Activated naive CD8-positive, alpha-beta T cell treated with anti-CD3 and anti-CD28 coated beads, Interleukin-2, amount 10 ng/mL, durations not matched to agents 7 days and 5 days (primary cell): ENCODE measurements at regions of chr9 and their contacts with region 1.

Region 1: DNA sequence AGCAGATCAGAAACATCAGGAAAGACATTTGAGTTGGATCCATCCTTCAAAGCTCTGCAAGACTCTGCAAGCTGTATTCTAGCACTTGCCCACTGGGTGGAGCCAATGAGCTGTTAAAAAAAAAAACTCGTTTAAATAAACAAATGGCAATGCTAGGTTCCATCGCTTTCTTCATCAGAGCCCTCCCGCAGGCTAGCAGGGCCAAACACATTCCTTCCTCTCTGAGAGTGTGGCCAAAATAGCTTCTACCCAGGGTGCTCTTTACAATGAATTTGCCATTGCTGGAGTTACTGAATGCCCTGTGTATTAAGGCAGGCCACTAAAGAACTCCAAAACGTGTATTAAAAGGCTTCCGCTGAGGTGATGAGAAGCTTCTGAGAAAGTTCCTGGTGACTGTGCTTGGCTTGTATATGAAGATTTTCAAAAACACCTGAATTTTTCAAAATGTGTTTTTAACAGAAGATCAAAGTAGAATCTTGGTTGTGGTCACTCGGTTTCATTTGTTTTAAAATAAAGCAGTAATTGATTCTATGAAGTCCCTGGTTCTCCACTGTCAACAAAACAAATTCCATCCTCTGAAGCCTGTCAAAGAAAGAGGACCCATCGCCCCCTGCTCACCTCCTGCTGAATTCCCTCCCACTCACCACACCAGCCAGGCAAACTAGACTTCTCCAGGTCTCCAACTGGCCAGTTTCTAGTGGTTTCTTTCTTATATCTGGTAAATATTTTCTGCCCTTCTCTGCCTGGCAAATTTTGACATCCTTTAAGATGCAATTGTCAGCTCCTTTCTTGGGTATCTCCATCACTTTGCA is 36.5 kb upstream of the EQTN start:
- DNase-seq: peak; percentile 58
- ATAC-seq: peak; percentile 64
- H3K4me3 Mint-ChIP-seq: no peak overlapping the region
- H3K27ac Mint-ChIP-seq: no peak overlapping the region
- H3K4me1 Mint-ChIP-seq: peaks cover 28% of the 10 kb centered on the region
- H3K27me3 Mint-ChIP-seq: no peaks in the 10 kb centered on the region

Region 2: GRCh38 chr9:27348785-27349695 is 15.6 kb after region 1 on chr9:
- POLR2A ChIA-PET with region 1: no interaction called
- DNase-seq: no peak
- ATAC-seq: no peak
- H3K4me3 Mint-ChIP-seq: no peak overlapping the region
- H3K27ac Mint-ChIP-seq: no peak overlapping the region
- H3K4me1 Mint-ChIP-seq: peaks cover 47% of the 10 kb centered on the region
- H3K27me3 Mint-ChIP-seq: no peaks in the 10 kb centered on the region

Region 3: GRCh38 chr9:27529316-27530278 is 196.2 kb after region 1 on chr9 and contains the start of gene MOB3B:
- POLR2A ChIA-PET with region 1: interaction called, 12 read pairs
- DNase-seq: peak; percentile 88
- ATAC-seq: peak; percentile 83
- H3K4me3 Mint-ChIP-seq: peak within 1 kb of the TSS; percentile 95
- H3K27ac Mint-ChIP-seq: peak within 1 kb of the TSS; percentile 85
- H3K4me1 Mint-ChIP-seq: peaks cover 13% of the 10 kb centered on the region
- H3K27me3 Mint-ChIP-seq: peaks cover 12% of the 10 kb centered on the region
- total RNA-seq, gene MOB3B: 3.2 to 3.6 TPM